CD8-positive, alpha-beta memory T cell (primary cell): ENCODE measurements at regions of chr6 and their contacts with region 1.

Region 1: DNA sequence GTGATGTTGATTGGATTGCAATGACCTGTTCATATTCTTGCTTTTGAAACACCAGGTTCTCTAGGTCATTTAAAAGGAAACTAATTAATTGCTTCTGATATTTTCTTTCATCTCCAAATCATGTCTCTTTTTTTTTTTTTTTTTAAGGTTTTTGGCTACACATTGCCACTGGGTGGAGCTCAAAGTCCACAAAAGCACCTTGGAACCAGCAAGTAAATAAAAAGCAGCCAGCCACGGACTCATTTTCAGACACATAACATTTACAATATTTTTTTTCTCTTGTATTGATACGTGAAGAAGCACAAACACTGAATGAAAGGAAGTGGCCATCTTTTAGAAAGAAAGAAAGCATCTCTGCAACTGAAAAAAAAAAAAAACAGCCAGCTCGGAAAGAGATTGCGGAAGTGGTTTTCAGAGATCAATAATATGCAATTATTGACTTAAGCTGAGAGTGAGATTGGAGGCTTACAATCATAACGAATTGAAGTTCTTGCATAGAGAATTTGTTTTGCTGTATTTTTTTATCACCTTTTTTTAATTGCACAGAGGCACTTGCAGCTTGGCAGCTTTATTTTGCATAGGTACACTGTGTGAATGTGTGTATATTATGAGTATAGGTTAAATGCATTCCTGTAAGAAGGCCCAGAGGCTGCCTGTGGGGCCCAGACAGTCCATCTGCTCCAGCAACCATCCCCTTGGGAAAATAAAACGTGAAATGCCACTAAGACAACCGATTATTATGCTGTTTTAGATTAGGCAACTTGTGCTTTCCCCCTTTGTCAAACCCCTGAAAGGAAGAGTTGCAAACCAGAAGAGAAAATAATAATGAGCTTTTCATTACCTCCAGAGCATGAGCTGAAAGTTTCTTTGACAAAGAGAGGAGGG is 28.2 kb downstream of the CGA start:
- DNase-seq: peak in 2 of 5 donors; percentile 10 to 50
- H3K4me3 ChIP-seq: no peak overlapping the region
- H3K4me3 Mint-ChIP-seq: peak overlapping the region in 4 of 7 donors; percentile 27 to 59 (median 44)
- H3K27ac ChIP-seq: no peak overlapping the region
- H3K27ac Mint-ChIP-seq: no peak overlapping the region
- H3K4me1 ChIP-seq: no peaks in the 10 kb centered on the region
- H3K4me1 Mint-ChIP-seq: no peaks in the 10 kb centered on the region
- H3K27me3 ChIP-seq: peaks cover 3% of the 10 kb centered on the region
- H3K27me3 Mint-ChIP-seq: peaks cover 4 to 18% of the 10 kb centered on the region in 2 donors

Region 2: DNA sequence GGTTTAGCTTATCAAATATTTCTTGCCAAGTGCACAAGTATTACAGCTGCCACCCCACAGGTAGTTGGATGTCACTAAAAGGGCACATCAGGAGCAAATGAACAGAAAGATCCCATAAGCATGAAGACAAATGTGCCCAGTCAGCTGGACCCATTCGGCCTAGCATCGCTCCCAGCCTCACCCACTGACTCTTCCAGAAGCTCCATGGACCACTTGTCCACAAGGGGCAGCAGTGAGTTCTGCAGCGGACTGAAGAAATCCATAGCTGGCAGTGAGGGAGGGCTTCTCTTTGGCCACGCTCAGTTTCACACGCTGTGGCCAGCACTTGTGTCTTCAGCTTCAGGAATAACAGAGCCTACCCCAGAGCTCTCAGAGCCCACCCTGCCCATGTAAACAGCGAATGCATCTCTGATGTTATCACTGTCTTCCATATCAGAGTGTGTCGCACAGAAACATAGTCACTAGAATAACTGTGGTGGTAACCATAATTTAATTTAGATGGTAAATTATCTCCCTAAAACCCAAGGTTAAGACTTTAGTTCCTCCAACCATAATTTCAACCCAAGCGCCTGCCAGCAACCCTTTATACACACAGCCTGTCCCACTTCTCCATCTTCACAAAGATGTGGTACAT is 12.4 kb after region 1 on chr6:
- CTCF ChIA-PET with region 1: interaction called, 16 read pairs
- POLR2A ChIA-PET with region 1: no interaction called
- DNase-seq: peak; percentile 18 to 64 (median 24)
- H3K4me3 ChIP-seq: no peak overlapping the region
- H3K4me3 Mint-ChIP-seq: no peak overlapping the region
- H3K27ac ChIP-seq: no peak overlapping the region
- H3K27ac Mint-ChIP-seq: no peak overlapping the region
- H3K4me1 ChIP-seq: no peaks in the 10 kb centered on the region
- H3K4me1 Mint-ChIP-seq: no peaks in the 10 kb centered on the region
- H3K27me3 ChIP-seq: no peaks in the 10 kb centered on the region
- H3K27me3 Mint-ChIP-seq: peaks cover 8 to 24% of the 10 kb centered on the region in 2 donors